Cardiac septum (tissue), 1 donor: ENCODE measurements at regions of chr7 and their contacts with region 1.

Region 1: GRCh38 chr7:17769918-17770317 is 170.4 kb downstream of the SNX13 start:
- DNase-seq: no peak

Region 2: GRCh38 chr7:17986851-17987250 is 216.9 kb after region 1 on chr7:
- intact Hi-C with region 1: loop called (anchors 5 kb)
- DNase-seq: no peak

Region 3: GRCh38 chr7:18345641-18346234 is 575.8 kb after region 1 on chr7:
- intact Hi-C with region 1: loop called (anchors 10 kb)
- DNase-seq: no peak